ENCODE measurements at regions of chr12 and their contacts with region 1.

Region 1: DNA sequence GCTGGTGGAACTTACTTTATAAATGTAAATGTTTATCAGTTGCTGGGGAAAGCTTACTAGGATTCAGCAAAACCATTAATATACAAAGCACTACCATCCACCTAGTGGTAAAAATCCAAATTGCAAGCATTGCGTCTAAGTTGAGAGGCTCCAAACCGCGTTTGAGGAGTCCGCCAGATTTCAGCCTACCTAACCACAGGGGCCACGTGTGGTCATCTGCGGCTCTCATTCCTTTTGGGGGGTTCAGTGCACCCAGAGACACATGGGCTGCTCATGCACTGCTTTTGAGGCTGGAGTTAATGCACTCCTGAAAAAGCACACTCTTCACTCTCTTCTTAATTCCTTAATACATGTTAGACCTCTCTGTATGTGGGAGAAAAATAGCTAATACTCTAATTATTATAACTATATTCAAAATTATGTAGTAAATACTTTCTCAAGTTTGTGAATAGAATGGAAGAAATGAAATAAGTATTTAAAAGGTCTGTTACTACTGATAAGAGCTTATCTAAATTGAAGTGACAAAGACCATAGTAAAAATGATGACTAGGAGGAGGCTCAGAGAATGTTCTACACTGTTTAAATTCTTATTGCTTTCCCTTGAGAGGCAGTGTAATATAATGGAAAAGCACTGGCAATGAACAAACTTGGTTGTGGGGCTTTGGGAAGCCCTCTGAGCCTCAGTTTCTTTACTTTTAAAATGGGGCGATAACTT is 41.4 kb upstream of the MANSC4 start:
- DNase-seq: peak; percentile 89
- H3K4me3 ChIP-seq: peak overlapping the region in 1 of 3 experiments; percentile 6
- H3K27ac ChIP-seq: peak overlapping the region; percentile 99
- H3K4me1 ChIP-seq: peaks cover 24% of the 10 kb centered on the region
- H3K27me3 ChIP-seq: no peaks in the 10 kb centered on the region
- CTCF ChIP-seq: peak; percentile 60 to 66
- POLR2A ChIP-seq: no peak

Region 2: GRCh38 chr12:27747111-27747820 is 74.2 kb before region 1 on chr12:
- CTCF ChIA-PET with region 1: interaction called, 26 read pairs
- POLR2A ChIA-PET with region 1: no interaction called
- dilution Hi-C with region 1: no loop called
- intact Hi-C with region 1: no loop called
- DNase-seq: no peak
- H3K4me3 ChIP-seq: no peak overlapping the region
- H3K27ac ChIP-seq: no peak overlapping the region
- H3K4me1 ChIP-seq: no peaks in the 10 kb centered on the region
- H3K27me3 ChIP-seq: no peaks in the 10 kb centered on the region
- CTCF ChIP-seq: no peak
- POLR2A ChIP-seq: no peak

Region 3: GRCh38 chr12:27787559-27787958 is 33.9 kb before region 1 on chr12:
- CTCF ChIA-PET with region 1: interaction called, 10 read pairs
- POLR2A ChIA-PET with region 1: no interaction called
- dilution Hi-C with region 1: no loop called
- intact Hi-C with region 1: no loop called
- DNase-seq: no peak
- H3K4me3 ChIP-seq: no peak overlapping the region
- H3K27ac ChIP-seq: no peak overlapping the region
- H3K4me1 ChIP-seq: peaks cover 10% of the 10 kb centered on the region
- H3K27me3 ChIP-seq: no peaks in the 10 kb centered on the region
- CTCF ChIP-seq: no peak
- POLR2A ChIP-seq: no peak

Region 4: DNA sequence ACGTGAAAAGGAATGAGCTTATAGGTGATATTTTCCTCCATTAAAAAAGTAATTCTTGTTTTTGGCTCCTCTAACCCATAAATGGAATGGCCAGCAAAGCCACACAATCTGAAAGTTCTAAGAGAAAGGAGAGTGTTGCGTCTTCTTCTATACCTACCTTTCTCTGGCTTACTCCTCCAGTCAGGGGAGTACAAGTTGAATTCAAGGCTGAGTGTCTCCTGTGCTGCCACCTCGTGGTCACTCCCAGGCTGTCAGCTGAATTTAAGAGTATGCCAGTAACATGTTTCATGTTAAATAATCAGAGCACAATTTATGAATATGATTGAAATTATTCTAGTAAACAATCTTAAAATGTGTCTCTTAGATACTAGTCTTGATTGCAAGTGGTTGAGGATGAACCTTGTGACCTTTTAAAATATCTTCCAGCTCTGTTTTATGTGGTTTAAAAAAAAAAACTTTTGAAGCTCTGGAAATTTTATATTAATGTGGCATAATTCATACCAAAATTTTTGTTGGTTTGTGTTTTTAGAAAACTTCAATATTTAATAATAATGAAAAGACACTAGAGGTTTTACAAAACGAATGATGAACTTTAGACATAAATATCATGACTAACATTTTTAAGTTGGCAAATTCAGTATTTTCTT is 119.5 kb after region 1 on chr12:
- CTCF ChIA-PET with region 1: interaction called, 15 read pairs
- POLR2A ChIA-PET with region 1: no interaction called
- dilution Hi-C with region 1: no loop called
- intact Hi-C with region 1: loop called (anchors 1 kb)
- DNase-seq: peak; percentile 87
- H3K4me3 ChIP-seq: no peak overlapping the region
- H3K27ac ChIP-seq: no peak overlapping the region
- H3K4me1 ChIP-seq: no peaks in the 10 kb centered on the region
- H3K27me3 ChIP-seq: no peaks in the 10 kb centered on the region
- CTCF ChIP-seq: peak; percentile 74 to 82
- POLR2A ChIP-seq: no peak

Region 5: DNA sequence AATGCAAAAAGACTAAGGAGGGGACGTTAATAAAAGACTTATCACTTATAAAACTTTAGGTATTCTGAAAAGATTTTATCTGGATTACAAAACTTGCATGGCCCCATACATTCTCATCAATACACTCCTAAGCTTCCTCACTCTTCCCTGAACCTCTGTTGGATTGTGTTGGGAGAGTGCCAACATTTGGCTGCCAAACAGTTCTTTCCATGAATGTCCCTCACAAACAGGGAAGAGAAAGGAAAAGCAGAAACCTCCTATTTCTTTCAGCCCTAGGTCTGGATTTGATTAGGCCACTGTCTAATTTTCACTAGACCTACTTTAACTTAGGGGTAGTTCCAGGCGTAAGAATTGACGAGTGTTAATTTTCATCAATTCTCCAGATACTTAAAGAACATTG is 139.4 kb after region 1 on chr12:
- CTCF ChIA-PET with region 1: no interaction called
- POLR2A ChIA-PET with region 1: no interaction called
- dilution Hi-C with region 1: no loop called
- intact Hi-C with region 1: no loop called
- DNase-seq: peak; percentile 66
- H3K4me3 ChIP-seq: no peak overlapping the region
- H3K27ac ChIP-seq: no peak overlapping the region
- H3K4me1 ChIP-seq: peaks cover 8% of the 10 kb centered on the region
- H3K27me3 ChIP-seq: no peaks in the 10 kb centered on the region
- CTCF ChIP-seq: no peak
- POLR2A ChIP-seq: no peak

Region 6: GRCh38 chr12:28872654-28873268 is 1051.3 kb after region 1 on chr12:
- CTCF ChIA-PET with region 1: no interaction called
- POLR2A ChIA-PET with region 1: no interaction called
- dilution Hi-C with region 1: no loop called
- intact Hi-C with region 1: loop called (anchors 10 kb)
- DNase-seq: peak; percentile 70
- H3K4me3 ChIP-seq: no peak overlapping the region
- H3K27ac ChIP-seq: no peak overlapping the region
- H3K4me1 ChIP-seq: no peaks in the 10 kb centered on the region
- H3K27me3 ChIP-seq: no peaks in the 10 kb centered on the region
- CTCF ChIP-seq: peak; percentile 69 to 74
- POLR2A ChIP-seq: no peak

Measured in endothelial cell of umbilical vein (primary cell).